Activated CD8-positive, alpha-beta T cell treated with anti-CD3 and anti-CD28 coated beads, Interleukin-2, amount 10 ng/mL, durations not matched to agents 7 days and 5 days (primary cell): ENCODE measurements at regions of chr1 and their contacts with region 1.

Region 1: DNA sequence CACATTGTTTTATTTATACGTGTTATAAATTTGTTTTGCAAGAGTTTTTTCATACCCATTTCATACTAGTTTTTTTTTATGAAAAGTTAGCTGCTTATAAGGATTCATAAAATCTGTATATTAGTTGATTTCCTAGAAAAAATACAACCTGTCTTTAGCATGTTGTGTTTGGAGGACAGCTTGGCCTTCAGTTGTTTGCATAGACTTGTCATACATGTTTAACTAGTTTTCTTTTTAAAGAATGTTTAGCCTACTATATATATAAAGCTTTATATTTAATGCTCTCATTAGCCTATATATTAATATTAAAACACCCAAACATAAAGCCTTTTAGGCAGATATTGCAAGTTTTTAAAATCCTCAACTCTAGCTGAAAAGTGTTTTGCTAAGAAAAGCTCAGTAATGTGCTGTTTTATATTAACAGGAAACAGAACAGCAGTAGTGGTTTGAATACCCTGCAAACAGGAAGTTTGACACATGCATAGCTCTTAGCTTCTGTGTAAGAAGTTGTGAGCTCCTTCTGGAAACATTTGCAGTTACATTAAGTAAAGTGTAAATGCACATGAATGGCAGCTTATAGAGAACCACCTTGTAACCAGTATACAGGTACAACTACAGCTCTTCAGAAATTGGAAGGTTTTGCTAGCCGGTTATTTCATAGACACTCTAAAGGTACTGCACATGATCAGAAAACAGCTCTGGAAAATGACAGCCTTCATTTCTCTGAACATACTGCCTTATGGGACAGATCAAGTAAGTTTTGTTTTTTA is at the start of gene PRKACB:
- DNase-seq: peak; percentile 42
- ATAC-seq: peak; percentile 94
- H3K4me3 Mint-ChIP-seq: peak within 1 kb of the TSS; percentile 88
- H3K27ac Mint-ChIP-seq: peak within 1 kb of the TSS; percentile 95
- H3K4me1 Mint-ChIP-seq: peaks cover 27% of the 10 kb centered on the region
- H3K27me3 Mint-ChIP-seq: no peaks in the 10 kb centered on the region
- total RNA-seq, gene PRKACB: 85.2 to 96.3 TPM

Region 2: GRCh38 chr1:84103197-84103992 is 40.6 kb before region 1 on chr1:
- CTCF ChIA-PET with region 1: no interaction called
- POLR2A ChIA-PET with region 1: no interaction called
- DNase-seq: no peak
- ATAC-seq: peak; percentile 39
- H3K4me3 Mint-ChIP-seq: no peak overlapping the region
- H3K27ac Mint-ChIP-seq: no peak overlapping the region
- H3K4me1 Mint-ChIP-seq: no peaks in the 10 kb centered on the region
- H3K27me3 Mint-ChIP-seq: no peaks in the 10 kb centered on the region

Region 3: DNA sequence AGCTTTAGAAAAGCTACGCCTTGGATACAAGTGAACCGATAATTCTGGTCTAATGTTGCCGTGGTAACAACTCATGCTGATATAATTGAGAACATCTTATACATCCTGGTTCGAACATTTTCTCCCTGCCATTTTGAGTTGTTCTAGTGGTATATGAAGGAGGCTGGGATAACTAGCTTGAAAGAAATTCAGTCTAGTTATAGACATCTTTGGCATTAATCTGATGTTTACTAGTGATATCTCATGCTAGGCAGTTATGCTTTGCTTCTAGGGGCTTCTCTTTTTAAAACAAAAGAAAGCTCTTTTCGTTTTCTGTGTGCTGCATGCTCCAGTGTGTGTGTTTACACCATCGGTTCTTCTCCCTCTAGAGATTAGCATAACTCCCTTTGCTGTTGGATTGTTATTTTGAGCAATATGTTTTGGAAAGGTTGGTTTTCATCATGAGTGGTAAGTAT is 20.6 kb after region 1 on chr1:
- CTCF ChIA-PET with region 1: interaction called, 19 read pairs
- POLR2A ChIA-PET with region 1: interaction called, 9 read pairs
- DNase-seq: no peak
- ATAC-seq: peak; percentile 58
- H3K4me3 Mint-ChIP-seq: peak overlapping the region; percentile 48
- H3K27ac Mint-ChIP-seq: peak overlapping the region; percentile 56
- H3K4me1 Mint-ChIP-seq: peaks cover 66% of the 10 kb centered on the region
- H3K27me3 Mint-ChIP-seq: no peaks in the 10 kb centered on the region

Region 4: DNA sequence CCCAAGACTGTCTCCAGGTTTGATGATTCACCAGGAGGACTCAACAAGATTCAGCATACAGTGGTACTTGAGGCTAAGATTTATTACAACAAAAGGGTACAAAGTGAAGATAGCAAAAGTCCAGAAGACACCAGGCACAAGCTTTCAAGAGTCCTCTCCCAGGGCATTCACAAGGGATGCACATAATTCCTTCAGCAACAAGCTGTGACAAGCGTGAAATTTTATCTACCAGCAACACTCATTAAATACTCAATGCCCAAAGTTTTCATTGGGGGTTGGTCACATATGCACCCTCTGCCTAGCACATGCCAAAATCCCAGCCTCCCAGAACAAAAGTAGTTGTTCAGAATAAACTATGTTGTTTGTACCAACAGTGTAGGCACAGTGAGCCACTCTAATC is 62.4 kb after region 1 on chr1:
- CTCF ChIA-PET with region 1: no interaction called
- POLR2A ChIA-PET with region 1: no interaction called
- DNase-seq: no peak
- ATAC-seq: no peak
- H3K4me3 Mint-ChIP-seq: no peak overlapping the region
- H3K27ac Mint-ChIP-seq: no peak overlapping the region
- H3K4me1 Mint-ChIP-seq: no peaks in the 10 kb centered on the region
- H3K27me3 Mint-ChIP-seq: no peaks in the 10 kb centered on the region

Region 5: GRCh38 chr1:84298328-84298683 is 154.3 kb after region 1 on chr1:
- CTCF ChIA-PET with region 1: interaction called, 15 read pairs
- POLR2A ChIA-PET with region 1: interaction called, 14 read pairs
- DNase-seq: peak; percentile 55
- ATAC-seq: peak; percentile 89
- H3K4me3 Mint-ChIP-seq: peak overlapping the region; percentile 83
- H3K27ac Mint-ChIP-seq: peak overlapping the region; percentile 65
- H3K4me1 Mint-ChIP-seq: peaks cover 40% of the 10 kb centered on the region
- H3K27me3 Mint-ChIP-seq: peaks cover 2% of the 10 kb centered on the region

Region 6: GRCh38 chr1:84433258-84434080 is 289.5 kb after region 1 on chr1:
- CTCF ChIA-PET with region 1: interaction called, 177 read pairs
- POLR2A ChIA-PET with region 1: interaction called, 26 read pairs
- DNase-seq: peak; percentile 80
- ATAC-seq: peak; percentile 74
- H3K4me3 Mint-ChIP-seq: peak overlapping the region; percentile 66
- H3K27ac Mint-ChIP-seq: peak overlapping the region; percentile 58
- H3K4me1 Mint-ChIP-seq: peaks cover 10% of the 10 kb centered on the region
- H3K27me3 Mint-ChIP-seq: no peaks in the 10 kb centered on the region

Region 7: GRCh38 chr1:84573967-84574842 is 430.2 kb after region 1 on chr1 and contains the start of gene CTBS:
- CTCF ChIA-PET with region 1: interaction called, 9 read pairs
- POLR2A ChIA-PET with region 1: interaction called, 35 read pairs
- DNase-seq: peak; percentile 90
- ATAC-seq: peak; percentile 95
- H3K4me3 Mint-ChIP-seq: peak within 1 kb of the TSS; percentile 94
- H3K27ac Mint-ChIP-seq: peak within 1 kb of the TSS; percentile 99
- H3K4me1 Mint-ChIP-seq: peaks cover 33% of the 10 kb centered on the region
- H3K27me3 Mint-ChIP-seq: no peaks in the 10 kb centered on the region
- total RNA-seq, gene CTBS: 12.3 to 12.7 TPM

Region 8: DNA sequence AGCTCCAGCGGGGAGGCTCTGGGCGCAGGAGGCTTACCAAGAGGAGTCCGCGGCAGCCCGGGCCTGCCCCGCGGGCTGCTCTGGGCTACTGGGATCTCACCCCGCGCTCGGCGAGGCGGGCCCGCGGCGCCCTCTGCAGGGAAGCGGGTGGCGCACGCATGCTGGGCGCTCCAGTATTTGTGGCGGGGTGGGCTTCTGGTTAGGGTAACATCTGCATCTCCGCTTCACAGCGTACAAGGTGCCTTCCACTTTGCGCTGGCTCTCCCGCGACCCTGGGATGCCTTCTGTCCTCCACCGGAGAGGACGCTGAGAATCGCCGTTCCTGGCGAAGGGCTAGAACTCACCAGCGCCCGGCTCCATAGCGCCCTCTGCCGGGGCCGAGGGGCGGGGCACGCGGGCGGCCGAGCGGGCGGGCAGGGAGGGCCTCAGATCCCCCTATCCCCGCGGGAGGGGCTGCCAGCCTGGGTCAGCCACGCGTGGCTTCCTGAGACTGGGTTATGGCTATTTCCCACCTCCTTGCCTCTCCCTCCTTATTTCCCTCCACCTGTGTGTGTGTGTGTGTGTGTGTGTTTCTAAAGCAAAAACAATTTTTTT is 476.8 kb after region 1 on chr1:
- CTCF ChIA-PET with region 1: interaction called, 19 read pairs
- POLR2A ChIA-PET with region 1: interaction called, 4 read pairs
- DNase-seq: peak; percentile 81
- ATAC-seq: peak; percentile 96
- H3K4me3 Mint-ChIP-seq: peak overlapping the region; percentile 84
- H3K27ac Mint-ChIP-seq: peak overlapping the region; percentile 83
- H3K4me1 Mint-ChIP-seq: peaks cover 13% of the 10 kb centered on the region
- H3K27me3 Mint-ChIP-seq: peaks cover 3% of the 10 kb centered on the region